ENCODE measurements at regions of chr3 and their contacts with region 1.

Region 1: GRCh38 chr3:100073899-100074307 is 40.4 kb downstream of the FILIP1L start:
- DNase-seq: peak; percentile 58
- ATAC-seq: peak; percentile 17
- H3K4me3 Mint-ChIP-seq: peak overlapping the region; percentile 45
- H3K27ac Mint-ChIP-seq: peak overlapping the region; percentile 88
- H3K4me1 Mint-ChIP-seq: peaks cover 65% of the 10 kb centered on the region
- H3K27me3 Mint-ChIP-seq: no peaks in the 10 kb centered on the region

Region 2: DNA sequence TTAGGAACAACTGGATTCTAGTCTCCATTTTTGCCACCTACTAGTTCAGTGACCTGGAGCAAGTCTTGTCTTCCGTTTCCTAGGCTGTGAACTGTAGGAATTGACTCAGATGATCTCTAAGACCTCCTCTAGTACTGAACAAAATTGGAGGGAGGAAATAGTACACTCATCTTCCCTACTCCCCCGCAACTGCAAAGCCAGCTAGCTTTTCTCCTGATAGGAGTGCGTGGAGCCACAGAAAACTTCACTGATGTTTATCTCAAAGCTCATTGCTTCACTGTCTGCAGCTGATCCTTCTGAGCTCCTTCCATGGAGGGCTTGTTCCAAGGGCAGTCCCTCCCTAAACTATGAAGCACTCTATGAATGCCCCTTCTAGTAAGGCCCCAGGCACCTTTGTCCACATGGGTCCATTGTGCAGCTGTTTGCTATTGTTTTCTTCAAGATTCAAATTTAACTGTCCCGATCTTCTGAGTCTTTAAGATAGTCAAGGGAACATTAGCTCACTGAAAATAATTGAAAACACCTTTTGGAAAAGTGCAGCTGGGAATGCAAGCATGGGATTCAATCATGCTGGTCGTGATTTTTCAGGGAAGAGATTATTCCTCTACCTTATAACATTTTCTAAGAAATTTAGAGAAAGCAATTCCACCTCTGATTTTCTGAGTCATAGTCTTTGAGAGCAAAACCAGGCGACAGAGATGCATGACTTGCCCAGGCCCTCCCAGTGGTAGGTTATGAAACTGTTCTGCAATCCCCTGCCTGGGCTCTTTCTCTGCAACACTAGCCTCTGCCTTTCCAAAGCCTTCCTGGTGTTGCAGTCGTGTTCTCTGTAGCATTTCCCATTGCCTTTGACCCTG is 16.1 kb after region 1 on chr3:
- CTCF ChIA-PET with region 1: interaction called, 59 read pairs
- DNase-seq: peak; percentile 65
- ATAC-seq: peak; percentile 87
- H3K4me3 Mint-ChIP-seq: no peak overlapping the region
- H3K27ac Mint-ChIP-seq: peak overlapping the region; percentile 47
- H3K4me1 Mint-ChIP-seq: peaks cover 52% of the 10 kb centered on the region
- H3K27me3 Mint-ChIP-seq: peaks cover 10% of the 10 kb centered on the region

Region 3: GRCh38 chr3:100254168-100254777 is 180.4 kb after region 1 on chr3:
- CTCF ChIA-PET with region 1: interaction called, 54 read pairs
- DNase-seq: peak; percentile 72
- ATAC-seq: peak; percentile 92
- H3K4me3 Mint-ChIP-seq: no peak overlapping the region
- H3K27ac Mint-ChIP-seq: no peak overlapping the region
- H3K4me1 Mint-ChIP-seq: peaks cover 14% of the 10 kb centered on the region
- H3K27me3 Mint-ChIP-seq: no peaks in the 10 kb centered on the region